ENCODE measurements at regions of chr3 and their contacts with region 1.

Region 1: GRCh38 chr3:68893600-68894239 is 38.6 kb downstream of the TAFA4 start:
- ATAC-seq: no peak
- H3K4me3 ChIP-seq: no peak overlapping the region
- H3K27ac ChIP-seq: no peak overlapping the region
- H3K4me1 ChIP-seq: peaks cover 0 to 8% of the 10 kb centered on the region in 2 donors

Region 2: DNA sequence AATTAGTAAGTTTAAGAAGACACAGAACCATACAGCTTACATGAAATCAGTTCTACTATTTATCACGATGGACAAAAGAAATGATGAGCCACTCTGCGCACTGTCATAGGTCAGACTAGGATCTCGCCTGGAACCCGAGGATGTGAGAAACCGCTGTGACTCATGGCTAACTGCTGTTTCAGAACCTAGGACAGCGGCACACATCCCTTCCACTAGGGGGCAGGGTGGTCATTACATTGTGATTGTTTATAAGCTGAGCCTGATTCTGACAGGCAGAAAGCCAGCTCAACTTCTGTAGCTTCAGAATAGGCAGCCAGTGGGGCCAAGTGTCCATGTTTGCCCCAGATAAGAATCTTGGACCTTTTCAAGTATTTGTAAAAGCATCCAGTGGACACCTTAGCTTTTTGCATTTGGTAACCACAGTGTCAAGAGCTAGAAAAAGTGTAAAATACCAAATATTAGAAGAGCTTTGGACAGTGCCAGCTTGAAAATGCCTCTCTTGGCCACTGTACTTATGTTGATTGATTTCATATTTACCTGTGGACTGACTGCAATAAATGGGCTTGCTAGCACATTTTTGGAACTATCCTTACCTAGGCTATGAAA is 1779.8 kb before region 1 on chr3:
- in situ Hi-C with region 1: loop called in 5 of 9 experiments (anchors 10 to 25 kb)
- ATAC-seq: peak; percentile 93 to 100 (median 98)
- H3K4me3 ChIP-seq: no peak overlapping the region
- H3K27ac ChIP-seq: no peak overlapping the region
- H3K4me1 ChIP-seq: no peaks in the 10 kb centered on the region

Region 3: DNA sequence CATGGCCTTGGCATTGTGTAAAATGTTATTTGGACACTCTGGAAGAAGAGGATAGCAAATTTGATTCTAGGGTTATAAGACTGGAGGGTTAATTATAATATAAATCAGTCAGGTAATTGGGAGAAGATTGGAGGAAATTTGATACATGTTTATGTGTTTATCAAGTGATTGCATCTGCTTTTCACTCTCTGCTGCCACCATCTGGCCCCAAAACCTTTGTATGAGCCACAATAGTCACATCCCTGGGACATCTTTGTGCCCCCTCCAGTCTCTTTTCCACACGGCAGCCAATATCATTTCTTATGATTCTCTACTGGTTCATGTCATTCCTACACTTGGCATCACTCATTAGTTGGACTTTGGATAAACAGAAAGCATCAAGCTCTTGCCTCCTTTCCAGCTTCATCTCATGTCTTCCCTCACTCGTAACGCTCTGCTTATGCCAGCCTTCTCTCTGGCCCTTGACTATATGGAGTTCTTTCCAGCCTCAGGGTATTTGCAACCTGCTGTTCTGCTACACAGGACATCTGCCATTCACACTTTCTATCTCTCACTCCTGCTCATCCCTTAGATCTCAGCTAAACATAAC is 637.0 kb before region 1 on chr3:
- in situ Hi-C with region 1: no loop called
- ATAC-seq: peak in 2 of 8 experiments; percentile 37 to 43
- H3K4me3 ChIP-seq: no peak overlapping the region
- H3K27ac ChIP-seq: no peak overlapping the region
- H3K4me1 ChIP-seq: no peaks in the 10 kb centered on the region

Region 4: DNA sequence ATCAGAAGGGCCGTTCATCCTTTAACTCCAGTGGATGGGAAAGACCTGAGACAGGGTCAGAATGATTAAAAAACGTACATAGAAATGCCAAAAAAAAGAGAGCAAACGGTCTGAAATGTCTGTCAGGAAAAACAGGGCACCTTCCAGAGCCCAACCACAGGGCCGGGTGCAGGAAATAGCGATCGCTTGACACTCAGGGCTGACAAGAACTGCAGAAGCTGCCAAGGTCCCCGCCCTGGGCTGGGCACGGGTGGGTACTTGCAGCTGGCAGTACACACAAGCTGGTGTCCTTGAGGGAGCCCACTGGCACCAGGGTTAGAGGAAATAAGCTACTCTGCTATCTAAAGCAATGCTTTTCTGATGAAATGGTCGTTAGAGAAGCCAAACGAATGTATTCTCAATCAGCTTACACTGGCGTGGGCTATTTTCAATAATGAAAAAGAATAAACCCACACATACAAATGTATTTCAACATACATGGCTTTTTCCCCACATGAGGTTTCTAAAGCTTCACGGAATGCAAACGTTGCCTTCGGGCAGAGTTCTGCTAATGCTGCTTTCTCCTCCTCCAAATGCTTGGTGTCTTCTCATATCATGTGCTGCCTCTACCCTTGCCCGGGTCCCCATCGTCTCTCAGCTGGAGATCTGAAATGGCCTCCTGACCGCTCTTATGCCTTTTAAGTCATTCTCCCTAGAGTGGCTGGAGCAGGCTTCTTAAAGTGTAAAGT is 476.6 kb after region 1 on chr3:
- in situ Hi-C with region 1: no loop called
- ATAC-seq: peak in 3 of 8 experiments; percentile 37 to 86 (median 82)
- H3K4me3 ChIP-seq: no peak overlapping the region
- H3K27ac ChIP-seq: no peak overlapping the region
- H3K4me1 ChIP-seq: no peaks in the 10 kb centered on the region